Panc1 (cell line): ENCODE measurements at regions of chr3 and their contacts with region 1.

Region 1: GRCh38 chr3:160038862-160039562 is 50.4 kb downstream of the IL12A start:
- DNase-seq: no peak
- ATAC-seq: peak; percentile 76
- H3K4me3 ChIP-seq: peak overlapping the region; percentile 9 to 16; a peak in 2 of 4 replicates
- H3K27ac ChIP-seq: no peak overlapping the region
- H3K4me1 ChIP-seq: no peaks in the 10 kb centered on the region
- H3K27me3 ChIP-seq: peaks cover 24% of the 10 kb centered on the region
- CTCF ChIP-seq: no peak

Region 2: GRCh38 chr3:160139291-160139690 is 100.3 kb after region 1 on chr3:
- CTCF ChIA-PET with region 1: no interaction called
- POLR2A ChIA-PET with region 1: interaction called, 11 read pairs
- in situ Hi-C with region 1: no loop called
- intact Hi-C with region 1: no loop called
- DNase-seq: no peak
- ATAC-seq: no peak
- H3K4me3 ChIP-seq: no peak overlapping the region
- H3K27ac ChIP-seq: no peak overlapping the region
- H3K4me1 ChIP-seq: no peaks in the 10 kb centered on the region
- H3K27me3 ChIP-seq: no peaks in the 10 kb centered on the region
- CTCF ChIP-seq: no peak